IMR-90 (cell line): ENCODE measurements at regions of chr1 and their contacts with region 1.

Region 1: DNA sequence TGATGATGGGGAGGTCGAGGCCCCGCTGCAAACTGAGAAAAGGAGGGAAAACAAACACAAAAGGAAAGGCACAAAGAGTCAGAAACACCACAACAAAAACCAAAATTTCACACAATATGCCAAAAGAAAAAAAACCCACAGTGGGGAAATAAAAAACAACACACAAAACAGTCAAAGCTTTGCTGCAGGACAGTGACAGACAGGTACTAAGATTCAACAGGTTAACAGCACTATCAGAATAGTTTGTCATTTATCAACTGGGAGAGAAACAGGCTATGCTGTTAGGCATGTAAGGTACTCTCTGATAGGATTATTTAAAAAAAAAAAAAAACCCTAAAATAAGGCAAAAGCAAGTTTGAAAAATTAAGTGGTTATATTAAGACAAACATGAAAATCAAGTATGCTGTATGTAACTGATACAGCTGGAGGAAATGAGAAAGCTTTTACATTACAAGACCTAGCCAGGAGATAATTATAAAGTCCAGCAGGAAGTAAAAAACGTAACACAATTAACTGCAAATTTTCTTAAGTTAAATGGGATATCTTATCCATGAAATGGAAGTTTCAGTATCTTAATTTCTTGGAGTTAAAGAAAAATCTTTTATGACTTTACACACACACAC is 179.0 kb downstream of the EIF4G3 start:
- DNase-seq: no peak
- ATAC-seq: no peak
- H3K4me3 ChIP-seq: no peak overlapping the region
- H3K27ac ChIP-seq: no peak overlapping the region
- H3K4me1 ChIP-seq: 0 out of 2 replicates have a peak, but pooled peaks cover 1% of the 10 kb centered on the region
- H3K27me3 ChIP-seq: no peaks in the 10 kb centered on the region
- CTCF ChIP-seq: no peak
- POLR2A ChIP-seq: no peak
- RAD21 ChIP-seq: no peak

Region 2: DNA sequence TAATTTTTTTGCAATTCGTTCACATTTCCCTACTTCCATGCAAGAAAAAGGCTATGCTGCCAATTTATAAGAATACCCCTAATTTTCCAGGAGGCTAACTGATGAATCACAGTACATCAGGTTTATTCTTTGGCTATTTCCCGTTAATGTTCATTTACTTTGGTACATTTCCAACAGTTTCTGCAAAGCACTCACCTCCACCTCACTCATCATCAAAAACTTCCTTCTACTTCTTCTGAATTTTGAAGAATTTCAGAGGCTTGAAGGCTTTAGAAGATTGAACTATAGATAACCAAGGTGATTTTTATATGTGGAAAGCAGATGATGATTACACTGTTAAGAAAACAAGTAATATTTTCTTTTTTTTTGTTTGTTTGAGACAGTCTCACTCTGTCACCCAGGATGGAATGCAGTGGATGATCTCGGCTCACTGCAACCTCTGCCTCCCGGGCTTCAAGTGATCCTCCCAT is 150.1 kb before region 1 on chr1:
- CTCF ChIA-PET with region 1: no interaction called
- POLR2A ChIA-PET with region 1: no interaction called
- dilution Hi-C with region 1: no loop called
- in situ Hi-C with region 1: no loop called
- intact Hi-C with region 1: no loop called
- DNase-seq: peak; percentile 72
- ATAC-seq: peak; percentile 69
- H3K4me3 ChIP-seq: no peak overlapping the region
- H3K27ac ChIP-seq: no peak overlapping the region
- H3K4me1 ChIP-seq: peaks cover 8% of the 10 kb centered on the region
- H3K27me3 ChIP-seq: no peaks in the 10 kb centered on the region
- CTCF ChIP-seq: no peak
- POLR2A ChIP-seq: no peak
- RAD21 ChIP-seq: no peak

Region 3: GRCh38 chr1:21022279-21023040 is 24.7 kb after region 1 on chr1:
- CTCF ChIA-PET with region 1: no interaction called
- POLR2A ChIA-PET with region 1: interaction called, 17 read pairs
- dilution Hi-C with region 1: no loop called
- in situ Hi-C with region 1: no loop called
- intact Hi-C with region 1: no loop called
- DNase-seq: peak; percentile 99
- ATAC-seq: peak; percentile 97
- H3K4me3 ChIP-seq: no peak overlapping the region
- H3K27ac ChIP-seq: peak overlapping the region; percentile 45; the same call in 1 of the 2 replicates
- H3K4me1 ChIP-seq: peaks cover 10% of the 10 kb centered on the region
- H3K27me3 ChIP-seq: no peaks in the 10 kb centered on the region
- CTCF ChIP-seq: no peak
- POLR2A ChIP-seq: no peak
- RAD21 ChIP-seq: no peak; the same call in 1 of the 2 replicates